PC-3 (cell line): ENCODE measurements at regions of chr4 and their contacts with region 1.

Region 1: GRCh38 chr4:146370841-146371240 is 150.9 kb downstream of the SLC10A7 start:
- DNase-seq: peak; percentile 57
- ATAC-seq: peak; percentile 88
- H3K4me3 ChIP-seq: no peak overlapping the region
- H3K27ac ChIP-seq: no peak overlapping the region
- H3K4me1 ChIP-seq: peaks cover 9% of the 10 kb centered on the region
- H3K27me3 ChIP-seq: no peaks in the 10 kb centered on the region
- CTCF ChIP-seq: no peak

Region 2: GRCh38 chr4:146073517-146073916 is 297.3 kb before region 1 on chr4:
- CTCF ChIA-PET with region 1: no interaction called
- POLR2A ChIA-PET with region 1: no interaction called
- intact Hi-C with region 1: no loop called
- DNase-seq: no peak
- ATAC-seq: no peak
- H3K4me3 ChIP-seq: no peak overlapping the region
- H3K27ac ChIP-seq: no peak overlapping the region
- H3K4me1 ChIP-seq: no peaks in the 10 kb centered on the region
- H3K27me3 ChIP-seq: peaks cover 58% of the 10 kb centered on the region
- CTCF ChIP-seq: no peak

Region 3: GRCh38 chr4:146522098-146522868 is 151.4 kb after region 1 on chr4:
- CTCF ChIA-PET with region 1: no interaction called
- POLR2A ChIA-PET with region 1: interaction called, 3 read pairs
- intact Hi-C with region 1: loop called (anchors 2 kb)
- DNase-seq: peak; percentile 85
- ATAC-seq: peak; percentile 77
- H3K4me3 ChIP-seq: peak overlapping the region; percentile 93
- H3K27ac ChIP-seq: no peak overlapping the region
- H3K4me1 ChIP-seq: peaks cover 15% of the 10 kb centered on the region; the same call in 1 of the 2 replicates
- H3K27me3 ChIP-seq: no peaks in the 10 kb centered on the region
- CTCF ChIP-seq: no peak

Region 4: DNA sequence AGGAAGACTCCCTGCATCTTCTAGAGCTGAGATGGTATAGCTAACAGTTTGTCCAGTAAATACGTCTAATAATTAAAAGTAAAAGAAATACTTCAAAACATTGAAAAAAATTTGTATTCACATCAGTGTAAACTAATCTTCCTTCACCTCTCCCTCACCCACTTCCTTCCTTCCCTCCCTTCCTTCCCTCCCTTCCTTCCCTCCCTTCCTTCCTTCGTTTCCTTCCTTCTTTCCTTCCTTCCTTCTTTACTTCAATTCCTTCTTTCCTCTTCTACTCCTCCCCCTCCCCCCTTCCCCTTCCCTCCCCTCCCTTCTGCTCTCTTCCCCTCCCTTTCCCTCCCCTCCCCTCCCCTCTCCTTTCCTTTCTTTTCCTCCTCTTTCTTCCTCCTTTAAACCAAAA is 371.6 kb after region 1 on chr4:
- CTCF ChIA-PET with region 1: no interaction called
- POLR2A ChIA-PET with region 1: no interaction called
- intact Hi-C with region 1: no loop called
- DNase-seq: no peak
- ATAC-seq: no peak
- H3K4me3 ChIP-seq: no peak overlapping the region
- H3K27ac ChIP-seq: no peak overlapping the region
- H3K4me1 ChIP-seq: no peaks in the 10 kb centered on the region
- H3K27me3 ChIP-seq: 0 out of 2 replicates have a peak, but pooled peaks cover 4% of the 10 kb centered on the region
- CTCF ChIP-seq: no peak